Ascending aorta (tissue), 2 donors: ENCODE measurements at regions of chr10 and their contacts with region 1.

Region 1: GRCh38 chr10:63268798-63269503 is 135.8 kb downstream of the NRBF2 start:
- DNase-seq: peak; percentile 81 to 95
- H3K4me3 ChIP-seq: peak overlapping the region; percentile 55 to 64
- H3K27ac ChIP-seq: peak overlapping the region; percentile 76 to 84
- H3K4me1 ChIP-seq: no peaks in the 10 kb centered on the region
- H3K27me3 ChIP-seq: no peaks in the 10 kb centered on the region
- CTCF ChIP-seq: peak; percentile 20 to 54 (median 45)

Region 2: DNA sequence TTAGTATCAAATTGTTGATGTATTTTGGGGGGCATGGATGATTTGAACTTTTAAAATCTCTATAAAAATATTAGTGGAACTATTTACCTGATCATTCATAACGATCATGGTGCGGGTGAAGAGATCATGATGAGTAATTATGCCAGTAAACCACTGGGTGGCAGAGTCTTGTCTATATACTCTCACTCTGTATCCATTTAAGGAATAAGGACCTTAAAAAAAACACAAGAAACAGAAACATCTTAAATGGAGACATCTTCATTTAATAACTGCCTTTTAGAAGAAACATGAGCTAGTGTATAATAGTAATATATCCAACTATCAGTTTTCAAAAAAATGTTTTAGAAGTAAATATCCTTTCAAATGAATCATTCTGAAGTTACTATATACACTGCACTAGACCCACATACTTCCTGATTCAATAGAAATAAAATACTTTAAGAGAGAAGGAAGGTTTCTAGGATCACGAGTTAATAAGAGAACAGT is 51.8 kb before region 1 on chr10:
- intact Hi-C with region 1: loop called (anchors 5 kb)
- DNase-seq: no peak
- H3K4me3 ChIP-seq: no peak overlapping the region
- H3K27ac ChIP-seq: no peak overlapping the region
- H3K4me1 ChIP-seq: no peaks in the 10 kb centered on the region
- H3K27me3 ChIP-seq: no peaks in the 10 kb centered on the region
- CTCF ChIP-seq: peak; percentile 49 to 70 (median 56)

Region 3: DNA sequence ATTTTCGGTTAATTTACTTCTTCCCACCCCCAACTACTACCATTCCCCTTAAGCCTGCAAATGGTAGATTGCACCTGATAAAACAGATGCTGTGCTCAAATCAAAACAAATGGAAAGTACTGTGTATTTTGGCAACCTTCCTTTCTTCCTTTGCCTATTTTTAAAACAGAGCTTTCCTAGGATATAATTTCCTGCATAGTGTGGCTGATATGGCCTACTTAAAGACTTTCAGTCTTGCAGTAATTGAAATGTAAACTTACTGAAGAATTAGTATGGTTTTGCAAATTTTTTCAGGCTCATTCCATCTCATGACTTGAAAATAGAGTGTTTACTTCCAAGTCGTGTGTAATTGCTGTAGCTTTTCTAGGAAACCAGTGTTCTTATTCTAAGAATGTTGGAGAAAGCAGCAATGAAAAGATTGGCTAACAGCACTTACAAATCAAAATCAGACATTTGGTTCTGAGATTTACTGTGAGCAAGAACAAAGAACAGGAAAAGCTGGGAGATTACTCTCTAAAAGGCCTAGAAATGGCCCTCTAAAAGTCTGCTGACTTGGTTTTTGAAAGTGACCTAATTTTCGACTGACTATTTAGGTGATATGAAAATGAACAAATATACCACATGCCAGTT is 304.2 kb after region 1 on chr10:
- intact Hi-C with region 1: no loop called
- DNase-seq: no peak
- H3K4me3 ChIP-seq: peak overlapping the region in 1 of 2 donors; percentile 25
- H3K27ac ChIP-seq: peak overlapping the region; percentile 74 to 76
- H3K4me1 ChIP-seq: peaks cover 6 to 31% of the 10 kb centered on the region in 2 donors
- H3K27me3 ChIP-seq: no peaks in the 10 kb centered on the region
- CTCF ChIP-seq: no peak

Region 4: DNA sequence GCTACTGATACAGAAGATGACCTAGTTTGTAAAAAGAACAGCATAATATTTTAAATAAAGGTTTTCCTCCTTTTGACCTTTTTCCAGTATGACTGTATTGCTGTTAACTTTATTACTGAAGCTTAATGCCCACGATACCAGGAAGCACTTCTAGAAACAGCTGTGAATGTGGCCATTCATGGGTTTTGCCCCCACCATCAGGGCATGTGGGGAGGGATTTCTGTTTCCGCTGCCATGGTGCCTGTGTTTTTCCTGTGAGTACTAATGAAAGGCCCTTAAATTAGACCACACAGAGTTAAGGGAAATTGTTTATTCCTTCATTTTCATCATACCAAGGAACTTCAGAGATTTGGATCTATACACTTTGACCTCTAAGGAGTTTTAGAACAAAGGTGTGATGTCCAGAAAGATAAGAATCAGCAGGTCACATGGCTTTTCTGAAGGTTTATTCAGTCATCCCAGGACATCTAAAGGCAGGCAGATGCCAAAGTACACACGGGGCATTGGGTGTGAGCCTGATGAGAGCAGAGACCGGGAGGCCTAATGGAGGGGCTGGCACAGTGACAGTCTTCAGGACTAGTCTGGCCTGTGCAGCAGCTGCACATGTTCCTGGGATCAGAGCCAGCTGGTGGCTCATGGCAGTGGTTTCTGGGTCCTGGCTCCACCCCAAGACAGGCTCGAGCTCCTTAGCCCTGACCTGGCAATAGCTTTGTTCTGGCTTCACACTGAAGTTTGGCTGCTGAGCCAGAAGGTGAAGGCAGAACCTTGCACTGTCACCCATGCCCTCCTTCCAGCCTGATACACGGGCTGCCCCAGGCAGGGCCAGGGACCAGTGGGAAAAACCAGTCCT is 443.1 kb after region 1 on chr10:
- intact Hi-C with region 1: loop called (anchors 2 kb)
- DNase-seq: peak; percentile 89 to 98
- H3K4me3 ChIP-seq: peak overlapping the region in 1 of 2 donors; percentile 2
- H3K27ac ChIP-seq: peak overlapping the region; percentile 89 to 91
- H3K4me1 ChIP-seq: peaks cover 8 to 42% of the 10 kb centered on the region in 2 donors
- H3K27me3 ChIP-seq: no peaks in the 10 kb centered on the region
- CTCF ChIP-seq: no peak